ENCODE measurements at regions of chr19 and their contacts with region 1.

Region 1: GRCh38 chr19:14117668-14118164 is at the start of gene PRKACA:
- DNase-seq: peak; percentile 98 to 100 (median 99)

Region 2: GRCh38 chr19:14081325-14082093 is 36.2 kb before region 1 on chr19:
- intact Hi-C with region 1: loop called (anchors 5 kb)
- DNase-seq: peak; percentile 97 to 100 (median 98)

Region 3: DNA sequence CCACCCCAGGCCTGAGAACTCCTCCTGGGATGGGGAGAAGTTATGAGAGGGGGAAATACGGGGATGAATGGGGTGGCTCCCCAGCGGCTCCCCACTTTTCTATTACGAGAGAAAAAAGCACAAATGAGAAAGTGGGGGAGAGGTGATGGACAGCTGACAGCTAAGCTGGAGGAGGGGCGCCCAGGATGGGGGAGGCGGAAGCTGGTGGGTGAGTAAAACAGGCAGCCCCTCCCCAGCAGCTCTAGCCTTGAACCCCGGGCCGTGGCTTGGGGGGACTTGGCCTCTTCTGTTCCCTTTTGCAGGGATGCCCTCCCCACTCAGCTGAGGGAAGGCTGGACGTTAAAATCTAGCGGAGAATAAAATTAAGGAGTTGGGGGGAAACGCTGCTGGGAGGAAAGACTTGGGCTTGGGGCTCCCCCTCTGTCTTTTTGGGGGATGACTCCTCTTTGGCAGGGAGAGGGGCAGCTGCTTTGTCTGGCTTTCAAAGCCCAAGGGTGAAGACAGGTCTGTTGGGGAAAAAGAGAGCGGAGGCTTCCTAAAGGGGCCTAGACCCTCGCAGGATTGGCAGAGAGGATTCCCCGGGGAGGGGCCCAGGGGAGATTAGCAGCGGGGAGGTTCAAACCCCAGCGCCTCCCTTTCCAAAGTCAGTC is 25.8 kb before region 1 on chr19:
- intact Hi-C with region 1: loop called (anchors 2 kb)
- DNase-seq: no peak

Region 4: DNA sequence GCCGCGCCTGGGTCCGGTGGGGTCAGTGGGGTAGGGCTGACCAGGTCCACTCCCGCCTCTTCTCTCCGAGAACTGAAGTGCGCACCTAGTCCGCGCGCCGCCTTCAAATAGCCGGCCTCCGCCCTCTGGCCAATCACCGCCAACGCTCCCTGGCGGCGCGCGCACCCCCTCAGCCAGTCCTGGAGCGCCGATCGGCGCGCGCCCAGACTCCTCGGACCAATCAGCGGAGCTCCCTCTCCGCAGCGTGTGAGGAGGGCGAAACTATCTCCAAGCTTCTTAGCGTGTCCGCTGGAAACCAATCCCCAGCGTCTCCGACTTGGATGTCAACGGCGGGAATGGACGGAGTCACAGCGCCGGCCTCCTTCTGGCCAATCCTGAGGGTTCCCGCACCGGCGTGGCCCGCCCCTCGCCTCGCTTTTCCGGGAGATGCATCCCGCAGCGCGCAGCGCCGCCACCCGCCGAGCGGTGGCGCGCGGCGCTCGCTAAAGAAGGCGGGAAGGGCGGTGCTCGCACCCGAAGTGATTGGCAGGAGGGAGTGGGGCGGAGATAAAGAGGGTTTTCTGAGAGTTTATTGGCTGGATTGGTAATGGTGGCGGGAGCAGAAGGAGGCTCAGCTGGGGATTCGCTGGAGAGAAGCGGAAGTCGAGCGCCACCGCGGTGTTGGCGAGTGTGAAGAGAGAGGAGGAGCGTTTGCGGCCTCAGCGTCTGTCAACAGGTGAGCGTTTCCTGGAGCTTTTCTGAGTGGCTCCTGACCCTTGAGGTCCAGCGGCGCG is 19.0 kb after region 1 on chr19 and contains the start of gene ASF1B:
- intact Hi-C with region 1: loop called (anchors 1 kb)
- DNase-seq: peak; percentile 96 to 100 (median 99)

Region 5: GRCh38 chr19:14366498-14366915 is 248.8 kb after region 1 on chr19:
- intact Hi-C with region 1: no loop called
- DNase-seq: peak in 8 of 10 donors; percentile 30 to 89 (median 66)